ENCODE measurements at regions of chr6 and their contacts with region 1.

Region 1: GRCh38 chr6:139323511-139324300 is 31.9 kb upstream of the TXLNB start:
- DNase-seq: peak; percentile 40 to 87 (median 75)
- ATAC-seq: peak; percentile 86 to 91 (median 89)
- H3K4me3 ChIP-seq: peak overlapping the region; percentile 56 to 78
- H3K4me3 Mint-ChIP-seq: peak overlapping the region; percentile 83 to 85 (median 84)
- H3K27ac ChIP-seq: peak overlapping the region; percentile 98
- H3K27ac Mint-ChIP-seq: peak overlapping the region; percentile 99
- H3K4me1 ChIP-seq: peaks cover 7 to 30% of the 10 kb centered on the region in 2 experiments
- H3K4me1 Mint-ChIP-seq: peaks cover 33 to 42% (median 41%) of the 10 kb centered on the region in 3 donors
- H3K27me3 ChIP-seq: no peaks in the 10 kb centered on the region
- H3K27me3 Mint-ChIP-seq: no peaks in the 10 kb centered on the region

Region 2: DNA sequence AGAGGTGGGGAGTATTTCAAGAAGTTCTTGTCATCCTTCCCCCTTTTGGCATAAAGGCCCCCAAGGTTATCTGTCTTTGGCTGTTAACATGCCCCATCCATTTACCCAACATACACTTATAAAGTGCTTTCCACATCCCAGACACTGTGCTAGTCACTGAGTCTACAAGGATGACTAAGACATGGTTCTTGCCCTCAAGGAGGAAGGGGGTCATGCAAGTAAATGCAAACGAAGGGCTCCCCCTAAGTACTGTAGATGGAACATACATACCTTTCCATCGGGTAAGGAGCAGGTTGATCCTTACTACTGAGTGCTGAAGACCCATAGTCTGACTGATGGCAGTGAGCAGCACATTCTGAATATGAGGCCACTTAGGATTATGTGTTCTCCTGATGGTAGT is 150.5 kb before region 1 on chr6:
- CTCF ChIA-PET with region 1: no interaction called
- POLR2A ChIA-PET with region 1: interaction called, 3 to 10 read pairs
- DNase-seq: peak in 1 of 35 experiments; percentile 62
- ATAC-seq: peak; percentile 60 to 77 (median 72)
- H3K4me3 ChIP-seq: no peak overlapping the region
- H3K4me3 Mint-ChIP-seq: peak overlapping the region in 2 of 3 donors; percentile 30 to 60
- H3K27ac ChIP-seq: no peak overlapping the region
- H3K27ac Mint-ChIP-seq: peak overlapping the region; percentile 89
- H3K4me1 ChIP-seq: peaks cover 60 to 71% of the 10 kb centered on the region in 2 experiments
- H3K4me1 Mint-ChIP-seq: peaks cover 90 to 98% (median 91%) of the 10 kb centered on the region in 3 donors
- H3K27me3 ChIP-seq: no peaks in the 10 kb centered on the region
- H3K27me3 Mint-ChIP-seq: no peaks in the 10 kb centered on the region

Region 3: GRCh38 chr6:139219271-139219729 is 104.4 kb before region 1 on chr6:
- CTCF ChIA-PET with region 1: interaction called, 3 read pairs
- POLR2A ChIA-PET with region 1: interaction called, 5 to 13 read pairs
- DNase-seq: peak; percentile 40 to 82 (median 63)
- ATAC-seq: peak; percentile 99 to 100 (median 100)
- H3K4me3 ChIP-seq: no peak overlapping the region
- H3K4me3 Mint-ChIP-seq: peak overlapping the region; percentile 12 to 44 (median 41)
- H3K27ac ChIP-seq: peak overlapping the region; percentile 10
- H3K27ac Mint-ChIP-seq: peak overlapping the region; percentile 95 to 97
- H3K4me1 ChIP-seq: peaks cover 0 to 7% of the 10 kb centered on the region in 2 experiments
- H3K4me1 Mint-ChIP-seq: peaks cover 8 to 11% (median 10%) of the 10 kb centered on the region in 3 donors
- H3K27me3 ChIP-seq: no peaks in the 10 kb centered on the region
- H3K27me3 Mint-ChIP-seq: no peaks in the 10 kb centered on the region

Region 4: GRCh38 chr6:139291813-139292619 is 31.7 kb before region 1 on chr6 and contains the start of gene TXLNB:
- CTCF ChIA-PET with region 1: interaction called, 5 to 9 read pairs
- POLR2A ChIA-PET with region 1: interaction called, 3 to 14 read pairs
- DNase-seq: peak; percentile 51 to 91 (median 79)
- ATAC-seq: peak; percentile 87 to 97 (median 94)
- H3K4me3 ChIP-seq: peak within 1 kb of the TSS in 1 of 2 donors; percentile 44
- H3K4me3 Mint-ChIP-seq: peak within 1 kb of the TSS; percentile 67 to 78 (median 77)
- H3K27ac ChIP-seq: peak within 1 kb of the TSS; percentile 95
- H3K27ac Mint-ChIP-seq: peak within 1 kb of the TSS; percentile 97 to 98
- H3K4me1 ChIP-seq: peaks cover 30 to 34% of the 10 kb centered on the region in 2 experiments
- H3K4me1 Mint-ChIP-seq: peaks cover 63 to 78% (median 74%) of the 10 kb centered on the region in 3 donors
- H3K27me3 ChIP-seq: no peaks in the 10 kb centered on the region
- H3K27me3 Mint-ChIP-seq: no peaks in the 10 kb centered on the region
- total RNA-seq, gene TXLNB: 0.41 to 0.92 (median 0.72) TPM

Region 5: DNA sequence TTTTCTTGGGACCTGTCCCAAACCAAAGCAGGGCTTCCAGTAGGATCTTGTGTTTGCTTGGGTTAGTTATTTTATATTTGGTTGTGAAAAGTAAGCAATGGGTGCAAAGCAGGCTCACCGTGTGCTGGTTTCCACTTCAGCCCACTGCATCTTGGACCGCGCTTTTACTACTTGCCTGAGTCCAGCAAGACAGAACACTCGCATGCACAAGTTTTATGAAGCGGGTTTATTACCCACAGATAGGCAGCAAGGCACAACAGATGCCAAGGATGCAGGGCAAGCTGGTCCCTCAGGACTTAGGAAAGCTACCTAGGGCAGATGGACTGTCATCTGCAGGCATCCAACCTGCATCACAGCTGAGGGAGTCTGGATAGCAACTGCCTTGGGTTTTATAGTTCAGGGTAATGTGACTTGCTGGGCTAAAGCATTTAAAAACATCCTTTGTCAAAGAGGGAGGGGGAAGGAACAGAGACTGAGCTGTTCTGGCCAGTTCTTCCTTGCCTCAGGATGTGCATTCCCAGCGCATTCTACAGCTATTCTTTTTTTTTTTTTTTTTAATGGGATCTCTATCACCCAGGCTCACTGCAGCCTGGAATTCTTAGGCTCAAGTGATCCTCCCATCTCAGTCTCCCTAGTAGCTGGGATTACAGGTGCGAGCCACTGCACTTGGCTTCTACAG is 32.2 kb after region 1 on chr6:
- CTCF ChIA-PET with region 1: no interaction called
- POLR2A ChIA-PET with region 1: no interaction called
- DNase-seq: no peak
- ATAC-seq: no peak
- H3K4me3 ChIP-seq: no peak overlapping the region
- H3K4me3 Mint-ChIP-seq: no peak overlapping the region
- H3K27ac ChIP-seq: no peak overlapping the region
- H3K27ac Mint-ChIP-seq: no peak overlapping the region
- H3K4me1 ChIP-seq: no peaks in the 10 kb centered on the region
- H3K4me1 Mint-ChIP-seq: peaks cover 0 to 4% (median under 1%) of the 10 kb centered on the region in 3 donors
- H3K27me3 ChIP-seq: no peaks in the 10 kb centered on the region
- H3K27me3 Mint-ChIP-seq: no peaks in the 10 kb centered on the region

Region 6: DNA sequence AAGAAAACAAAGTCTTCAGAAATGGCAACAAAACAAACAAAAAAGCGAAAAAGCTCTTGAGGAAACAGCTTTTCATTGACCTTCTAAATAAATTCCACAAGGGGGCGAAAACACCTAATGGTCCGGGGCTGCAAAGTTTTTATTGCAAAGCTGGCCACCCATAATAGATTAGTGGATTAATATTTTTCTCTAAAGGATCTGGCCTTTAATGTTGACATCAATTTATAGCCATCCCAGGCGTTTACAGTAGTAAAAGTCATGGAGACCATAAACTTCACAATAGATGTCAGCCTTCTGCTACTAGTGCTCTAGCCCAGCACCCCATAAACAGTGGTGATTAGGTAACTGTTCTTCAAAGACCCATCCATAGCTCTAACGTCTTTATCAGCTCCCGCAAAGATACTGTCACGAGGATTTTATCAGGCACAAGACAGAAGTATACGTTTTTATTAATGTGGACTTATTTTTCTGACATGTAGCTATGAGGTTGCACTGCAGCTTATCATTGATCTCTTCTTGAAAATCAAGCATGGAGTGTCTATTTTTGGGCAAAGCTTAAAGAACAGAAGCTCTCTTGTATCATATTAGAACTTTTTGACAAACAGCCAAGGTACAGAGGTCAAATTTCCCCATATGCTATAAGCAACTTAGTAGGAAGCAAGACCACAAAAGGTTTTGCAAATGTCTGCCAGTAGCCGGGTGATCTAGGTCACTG is 46.0 kb after region 1 on chr6:
- CTCF ChIA-PET with region 1: interaction called in 1 of 2 experiments, 13 read pairs
- POLR2A ChIA-PET with region 1: interaction called, 5 to 17 read pairs
- DNase-seq: peak in 2 of 35 experiments; percentile 13 to 67
- ATAC-seq: no peak
- H3K4me3 ChIP-seq: peak overlapping the region in 1 of 2 donors; percentile 13
- H3K4me3 Mint-ChIP-seq: peak overlapping the region; percentile 60 to 100 (median 99)
- H3K27ac ChIP-seq: peak overlapping the region; percentile 93
- H3K27ac Mint-ChIP-seq: peak overlapping the region; percentile 97 to 99
- H3K4me1 ChIP-seq: peaks cover 18 to 19% of the 10 kb centered on the region in 2 experiments
- H3K4me1 Mint-ChIP-seq: peaks cover 42 to 48% (median 47%) of the 10 kb centered on the region in 3 donors
- H3K27me3 ChIP-seq: no peaks in the 10 kb centered on the region
- H3K27me3 Mint-ChIP-seq: no peaks in the 10 kb centered on the region

Measured in T-cell (primary cell).